ENCODE measurements at regions of chr3 and their contacts with region 1.

Region 1: GRCh38 chr3:152183473-152183872 is 85.3 kb upstream of the MBNL1 start:
- DNase-seq: peak; percentile 43 to 56 (median 55)
- H3K4me3 ChIP-seq: no peak overlapping the region
- H3K4me3 Mint-ChIP-seq: peak overlapping the region in 7 of 8 donors; percentile 7 to 50 (median 32)
- H3K27ac ChIP-seq: no peak overlapping the region
- H3K27ac Mint-ChIP-seq: peak overlapping the region in 5 of 7 donors; percentile 8 to 83 (median 61)
- H3K4me1 ChIP-seq: peaks cover 53% of the 10 kb centered on the region
- H3K4me1 Mint-ChIP-seq: peaks cover 29 to 48% (median 39%) of the 10 kb centered on the region in 4 donors
- H3K27me3 ChIP-seq: no peaks in the 10 kb centered on the region
- H3K27me3 Mint-ChIP-seq: no peaks in the 10 kb centered on the region

Region 2: GRCh38 chr3:152205097-152205593 is 21.7 kb after region 1 on chr3:
- CTCF ChIA-PET with region 1: interaction called, 17 read pairs
- POLR2A ChIA-PET with region 1: interaction called, 40 read pairs
- intact Hi-C with region 1: no loop called
- DNase-seq: peak in 3 of 5 donors; percentile 41 to 53 (median 47)
- H3K4me3 ChIP-seq: peak overlapping the region; percentile 41 to 63
- H3K4me3 Mint-ChIP-seq: peak overlapping the region; percentile 91 to 100 (median 98)
- H3K27ac ChIP-seq: peak overlapping the region; percentile 75
- H3K27ac Mint-ChIP-seq: peak overlapping the region; percentile 91 to 98 (median 96)
- H3K4me1 ChIP-seq: peaks cover 77% of the 10 kb centered on the region
- H3K4me1 Mint-ChIP-seq: peaks cover 41 to 79% (median 56%) of the 10 kb centered on the region in 4 donors
- H3K27me3 ChIP-seq: no peaks in the 10 kb centered on the region
- H3K27me3 Mint-ChIP-seq: no peaks in the 10 kb centered on the region

Region 3: DNA sequence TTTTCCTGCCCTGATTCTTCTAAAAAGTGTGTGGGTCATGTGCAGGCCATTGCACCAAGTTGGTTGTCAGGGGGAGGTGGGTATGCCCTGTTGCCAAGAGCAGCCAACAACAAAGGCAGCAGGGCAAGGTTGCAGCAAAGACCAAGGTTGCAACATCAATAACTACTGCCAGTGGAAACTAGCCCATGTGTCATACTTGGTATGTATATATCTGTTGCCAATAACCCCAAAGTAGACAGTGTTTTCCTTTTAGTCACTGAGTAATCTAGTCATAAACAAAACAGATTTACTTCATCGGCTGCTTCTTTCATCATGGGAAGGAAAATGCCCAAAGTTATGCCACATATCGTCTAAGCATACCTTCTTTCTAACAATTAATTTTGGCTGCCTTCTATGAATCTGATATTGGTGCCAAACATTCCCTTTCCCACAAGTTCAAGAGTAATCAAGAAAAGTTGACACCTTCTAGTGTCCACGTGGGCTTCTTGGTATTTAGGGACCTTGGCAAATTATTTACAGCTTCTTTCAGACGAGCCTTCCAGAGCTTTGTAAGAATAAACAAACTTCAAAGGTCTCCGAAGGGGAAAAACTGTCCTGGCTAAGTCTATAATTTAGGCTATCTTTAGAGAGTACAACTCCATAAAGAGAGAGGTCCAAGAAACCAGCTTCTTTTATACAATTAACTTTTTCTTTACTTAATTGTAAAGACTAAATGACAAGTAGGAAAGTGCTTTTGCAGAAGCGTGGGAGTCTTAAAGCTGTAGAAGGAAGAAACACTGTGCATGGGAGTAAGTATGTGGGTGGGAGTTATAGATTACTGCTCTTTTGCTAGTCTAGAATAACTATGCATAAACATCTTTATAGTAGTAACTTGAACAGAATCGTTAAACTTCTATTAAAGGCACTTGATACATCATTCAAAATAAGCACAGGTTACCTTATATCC is 75.2 kb after region 1 on chr3:
- CTCF ChIA-PET with region 1: interaction called, 11 read pairs
- POLR2A ChIA-PET with region 1: interaction called, 4 read pairs
- intact Hi-C with region 1: no loop called
- DNase-seq: peak in 4 of 5 donors; percentile 56 to 94 (median 62)
- H3K4me3 ChIP-seq: peak overlapping the region in 1 of 2 donors; percentile 37
- H3K4me3 Mint-ChIP-seq: peak overlapping the region; percentile 74 to 92 (median 80)
- H3K27ac ChIP-seq: peak overlapping the region; percentile 75
- H3K27ac Mint-ChIP-seq: peak overlapping the region; percentile 91 to 96 (median 94)
- H3K4me1 ChIP-seq: peaks cover 96% of the 10 kb centered on the region
- H3K4me1 Mint-ChIP-seq: peaks cover 78 to 92% (median 85%) of the 10 kb centered on the region in 4 donors
- H3K27me3 ChIP-seq: no peaks in the 10 kb centered on the region
- H3K27me3 Mint-ChIP-seq: no peaks in the 10 kb centered on the region

Region 4: DNA sequence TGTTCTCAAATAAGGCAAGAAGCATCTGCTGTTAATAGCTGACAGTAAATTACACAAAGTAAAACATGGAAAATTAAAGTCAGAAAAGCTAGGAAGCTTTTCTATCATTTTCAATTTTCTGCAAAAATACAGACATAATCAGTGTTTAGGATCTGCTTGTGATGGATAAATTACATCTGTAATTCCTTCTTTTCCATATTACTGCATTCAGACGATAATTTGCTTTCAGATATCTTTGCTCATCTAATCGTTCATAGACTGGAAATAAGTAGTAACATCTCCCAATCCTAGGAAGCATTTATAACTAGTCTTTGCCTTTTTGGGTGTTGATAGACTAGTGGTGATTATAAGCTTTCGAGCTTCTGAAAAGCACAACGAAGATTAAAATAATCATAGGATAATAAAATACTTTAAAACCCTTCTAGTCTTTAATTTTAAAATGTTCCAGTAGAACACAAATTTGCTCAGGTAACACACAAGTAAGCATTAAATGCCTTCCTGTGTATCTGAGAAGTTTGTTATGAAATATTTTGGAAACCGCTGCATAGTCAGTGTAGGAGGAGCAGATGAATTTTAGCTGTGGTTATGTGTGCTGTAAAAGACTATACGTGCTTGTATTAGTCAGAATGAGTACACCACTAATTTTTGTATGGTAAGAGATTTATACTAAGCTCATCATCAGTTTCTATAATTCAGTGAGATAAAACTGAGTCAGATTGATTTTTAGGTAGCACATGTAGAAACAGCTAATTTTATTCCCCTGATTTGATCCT is 126.2 kb after region 1 on chr3:
- CTCF ChIA-PET with region 1: interaction called, 19 read pairs
- POLR2A ChIA-PET with region 1: interaction called, 4 read pairs
- intact Hi-C with region 1: no loop called
- DNase-seq: peak in 3 of 5 donors; percentile 35 to 50 (median 44)
- H3K4me3 ChIP-seq: no peak overlapping the region
- H3K4me3 Mint-ChIP-seq: peak overlapping the region; percentile 4 to 62 (median 44)
- H3K27ac ChIP-seq: peak overlapping the region; percentile 33
- H3K27ac Mint-ChIP-seq: peak overlapping the region; percentile 39 to 90 (median 67)
- H3K4me1 ChIP-seq: peaks cover 88% of the 10 kb centered on the region
- H3K4me1 Mint-ChIP-seq: peaks cover 59 to 83% (median 70%) of the 10 kb centered on the region in 4 donors
- H3K27me3 ChIP-seq: no peaks in the 10 kb centered on the region
- H3K27me3 Mint-ChIP-seq: no peaks in the 10 kb centered on the region

Region 5: DNA sequence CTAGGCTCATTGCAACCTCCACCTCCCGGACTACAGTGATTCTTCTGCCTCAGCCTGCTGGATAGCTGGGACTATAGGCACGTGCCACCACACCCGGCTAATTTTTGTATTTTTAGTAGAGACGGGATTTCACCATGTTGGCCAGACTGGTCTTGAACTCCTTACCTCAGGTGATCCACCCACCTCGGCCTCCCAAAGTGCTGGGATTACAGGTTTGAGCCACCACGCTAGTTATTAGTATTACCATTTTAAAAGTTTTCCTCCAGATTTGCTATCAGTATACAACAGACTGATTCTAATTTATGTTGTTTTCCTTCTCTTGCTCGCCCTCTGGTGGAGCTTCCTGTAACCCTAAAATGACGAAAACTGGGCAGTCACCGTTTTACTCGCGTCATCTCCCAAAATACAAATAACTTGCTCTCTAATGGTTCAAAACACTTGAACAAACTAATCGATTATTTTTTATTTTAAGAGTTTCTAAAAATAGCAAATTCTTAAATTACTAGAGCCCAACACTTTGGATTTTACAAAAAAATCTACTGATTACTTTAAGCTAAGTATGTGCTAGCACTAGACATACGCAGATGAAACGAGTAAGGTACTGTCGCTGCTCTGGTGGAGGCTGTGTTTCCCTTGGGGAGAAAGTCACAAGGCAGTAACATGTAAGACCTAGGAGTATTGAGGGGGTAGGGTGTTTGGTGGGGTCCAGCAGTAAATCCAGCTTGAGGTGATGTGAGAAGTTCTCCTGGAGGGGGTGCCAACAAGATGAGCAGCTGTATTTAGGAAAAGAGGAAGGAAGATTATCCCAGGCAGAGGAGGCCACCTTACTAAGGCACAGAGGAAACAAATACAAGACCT is 288.6 kb after region 1 on chr3:
- CTCF ChIA-PET with region 1: interaction called, 17 read pairs
- POLR2A ChIA-PET with region 1: interaction called, 9 read pairs
- intact Hi-C with region 1: loop called (anchors 1 kb)
- DNase-seq: peak; percentile 65 to 74 (median 70)
- H3K4me3 ChIP-seq: no peak overlapping the region
- H3K4me3 Mint-ChIP-seq: peak overlapping the region; percentile 35 to 81 (median 65)
- H3K27ac ChIP-seq: peak overlapping the region; percentile 36
- H3K27ac Mint-ChIP-seq: peak overlapping the region; percentile 18 to 93 (median 85)
- H3K4me1 ChIP-seq: peaks cover 11% of the 10 kb centered on the region
- H3K4me1 Mint-ChIP-seq: peaks cover 13 to 19% (median 13%) of the 10 kb centered on the region in 4 donors
- H3K27me3 ChIP-seq: no peaks in the 10 kb centered on the region
- H3K27me3 Mint-ChIP-seq: no peaks in the 10 kb centered on the region

Region 6: DNA sequence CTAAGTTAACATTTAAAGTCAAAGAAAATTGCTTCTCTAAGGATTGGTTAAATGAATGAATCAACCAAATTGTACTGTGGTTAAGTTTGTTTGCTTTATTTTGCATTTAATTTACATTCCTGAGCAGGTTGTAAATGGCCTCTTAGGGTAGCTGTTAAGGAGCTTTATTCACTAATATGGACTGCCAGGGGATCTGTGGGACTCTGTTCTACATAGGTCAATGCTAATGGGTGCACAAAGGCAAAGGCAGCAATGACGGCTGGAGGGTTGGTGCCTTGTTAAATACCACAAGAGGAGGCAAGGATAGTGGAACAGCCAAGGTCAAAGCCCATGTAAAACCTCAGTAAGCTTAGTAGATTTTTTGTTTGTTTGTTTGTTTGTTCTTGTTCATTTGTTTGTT is 562.2 kb after region 1 on chr3:
- CTCF ChIA-PET with region 1: no interaction called
- POLR2A ChIA-PET with region 1: no interaction called
- intact Hi-C with region 1: no loop called
- DNase-seq: no peak
- H3K4me3 ChIP-seq: no peak overlapping the region
- H3K4me3 Mint-ChIP-seq: no peak overlapping the region
- H3K27ac ChIP-seq: no peak overlapping the region
- H3K27ac Mint-ChIP-seq: no peak overlapping the region
- H3K4me1 ChIP-seq: no peaks in the 10 kb centered on the region
- H3K4me1 Mint-ChIP-seq: no peaks in the 10 kb centered on the region
- H3K27me3 ChIP-seq: no peaks in the 10 kb centered on the region
- H3K27me3 Mint-ChIP-seq: peaks cover 0 to 1% of the 10 kb centered on the region in 2 donors

Measured in CD4-positive, alpha-beta memory T cell (primary cell).